Activated CD8-positive, alpha-beta memory T cell treated with anti-CD3 and anti-CD28 coated beads, Interleukin-2, amount 10 ng/mL, durations not matched to agents 7 days and 5 days (primary cell): ENCODE measurements at regions of chr3 and their contacts with region 1.

Region 1: GRCh38 chr3:127574880-127575878 is 15.4 kb downstream of the TPRA1 start:
- DNase-seq: peak; percentile 89
- ATAC-seq: peak; percentile 96
- H3K4me3 Mint-ChIP-seq: no peak overlapping the region
- H3K27ac Mint-ChIP-seq: peak overlapping the region; percentile 4
- H3K4me1 Mint-ChIP-seq: peaks cover 9% of the 10 kb centered on the region
- H3K27me3 Mint-ChIP-seq: no peaks in the 10 kb centered on the region

Region 2: GRCh38 chr3:127590593-127591477 is 15.7 kb after region 1 on chr3 and contains the start of gene TPRA1:
- CTCF ChIA-PET with region 1: interaction called, 86 read pairs
- DNase-seq: peak; percentile 90
- ATAC-seq: peak; percentile 87
- H3K4me3 Mint-ChIP-seq: peak within 1 kb of the TSS; percentile 88
- H3K27ac Mint-ChIP-seq: peak within 1 kb of the TSS; percentile 93
- H3K4me1 Mint-ChIP-seq: peaks cover 26% of the 10 kb centered on the region
- H3K27me3 Mint-ChIP-seq: no peaks in the 10 kb centered on the region
- total RNA-seq, gene TPRA1: 32.8 to 34.5 TPM

Region 3: DNA sequence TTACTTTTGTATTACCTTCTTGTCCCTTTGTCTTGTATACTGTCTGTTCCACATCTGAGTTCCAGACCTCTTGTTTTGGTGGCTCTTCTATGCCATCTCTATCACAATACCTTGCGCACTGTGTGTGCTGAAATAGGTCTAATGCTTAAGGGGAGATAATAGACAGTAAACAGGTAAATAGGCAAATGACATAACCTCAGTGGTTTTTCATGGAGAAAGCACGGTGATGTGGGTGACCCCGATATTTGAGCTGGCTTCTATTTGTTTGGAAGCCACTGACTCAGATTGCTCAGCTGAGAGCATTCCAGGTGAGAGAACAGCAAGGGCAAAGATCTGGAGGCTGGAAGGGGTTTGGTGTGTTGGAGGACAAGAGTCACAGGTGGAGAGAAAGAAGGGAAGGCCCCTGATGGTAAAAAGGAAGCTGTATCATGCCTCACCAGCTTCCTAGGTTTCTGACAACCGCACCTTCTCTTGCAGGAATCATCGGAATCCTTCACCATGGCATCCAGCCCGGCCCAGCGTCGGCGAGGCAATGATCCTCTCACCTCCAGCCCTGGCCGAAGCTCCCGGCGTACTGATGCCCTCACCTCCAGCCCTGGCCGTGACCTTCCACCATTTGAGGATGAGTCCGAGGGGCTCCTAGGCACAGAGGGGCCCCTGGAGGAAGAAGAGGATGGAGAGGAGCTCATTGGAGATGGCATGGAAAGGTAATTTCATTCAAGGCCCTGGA is 23.8 kb after region 1 on chr3:
- CTCF ChIA-PET with region 1: interaction called, 31 read pairs
- DNase-seq: no peak
- ATAC-seq: no peak
- H3K4me3 Mint-ChIP-seq: peak overlapping the region; percentile 86
- H3K27ac Mint-ChIP-seq: peak overlapping the region; percentile 91
- H3K4me1 Mint-ChIP-seq: peaks cover 53% of the 10 kb centered on the region
- H3K27me3 Mint-ChIP-seq: no peaks in the 10 kb centered on the region

Region 4: GRCh38 chr3:127628426-127628787 is 53.2 kb after region 1 on chr3:
- CTCF ChIA-PET with region 1: interaction called, 10 read pairs
- DNase-seq: no peak
- ATAC-seq: no peak
- H3K4me3 Mint-ChIP-seq: peak overlapping the region; percentile 65
- H3K27ac Mint-ChIP-seq: no peak overlapping the region
- H3K4me1 Mint-ChIP-seq: peaks cover 33% of the 10 kb centered on the region
- H3K27me3 Mint-ChIP-seq: peaks cover 49% of the 10 kb centered on the region

Region 5: GRCh38 chr3:127637546-127637945 is 62.4 kb after region 1 on chr3:
- CTCF ChIA-PET with region 1: interaction called, 15 read pairs
- DNase-seq: peak; percentile 89
- ATAC-seq: peak; percentile 98
- H3K4me3 Mint-ChIP-seq: no peak overlapping the region
- H3K27ac Mint-ChIP-seq: peak overlapping the region; percentile 75
- H3K4me1 Mint-ChIP-seq: peaks cover 31% of the 10 kb centered on the region
- H3K27me3 Mint-ChIP-seq: peaks cover 8% of the 10 kb centered on the region

Region 6: DNA sequence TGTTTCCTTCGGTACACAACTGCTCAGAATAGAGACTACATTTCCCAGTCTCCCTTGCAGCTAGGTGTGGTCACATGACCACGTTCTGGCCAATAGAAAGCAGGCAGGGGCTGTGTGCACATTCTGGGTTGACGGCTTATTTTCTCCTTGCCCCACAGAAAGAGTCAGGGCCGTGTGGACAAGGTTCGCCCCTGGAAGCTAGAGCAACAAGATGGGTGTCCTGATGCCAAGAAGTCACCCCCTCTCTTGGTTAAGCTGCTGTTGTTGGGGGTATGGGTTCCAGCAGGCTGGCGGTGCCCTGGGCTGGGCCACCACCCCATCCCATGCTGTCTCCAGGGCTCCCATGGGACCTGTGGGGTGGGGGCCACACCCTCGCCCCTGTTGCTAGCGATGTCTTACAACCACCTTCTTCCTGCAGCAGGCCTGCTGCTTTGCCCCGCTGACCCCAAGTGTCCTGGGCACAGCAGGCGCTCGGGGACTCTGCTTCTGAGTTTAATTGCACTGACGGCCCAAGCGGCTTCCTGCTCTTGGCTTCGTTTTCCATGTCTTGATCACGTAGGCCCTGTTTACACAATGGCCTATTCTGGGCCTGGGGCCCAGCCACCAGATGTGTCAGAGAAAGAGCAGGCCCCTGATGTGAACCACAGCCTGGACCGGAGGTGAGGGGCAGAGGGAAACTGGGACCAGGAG is 122.5 kb after region 1 on chr3:
- CTCF ChIA-PET with region 1: interaction called, 14 read pairs
- DNase-seq: peak; percentile 76
- ATAC-seq: peak; percentile 85
- H3K4me3 Mint-ChIP-seq: no peak overlapping the region
- H3K27ac Mint-ChIP-seq: no peak overlapping the region
- H3K4me1 Mint-ChIP-seq: peaks cover 8% of the 10 kb centered on the region
- H3K27me3 Mint-ChIP-seq: no peaks in the 10 kb centered on the region